Mucosa of descending colon (tissue), 3 donors: ENCODE measurements at regions of chr11 and their contacts with region 1.

Region 1: DNA sequence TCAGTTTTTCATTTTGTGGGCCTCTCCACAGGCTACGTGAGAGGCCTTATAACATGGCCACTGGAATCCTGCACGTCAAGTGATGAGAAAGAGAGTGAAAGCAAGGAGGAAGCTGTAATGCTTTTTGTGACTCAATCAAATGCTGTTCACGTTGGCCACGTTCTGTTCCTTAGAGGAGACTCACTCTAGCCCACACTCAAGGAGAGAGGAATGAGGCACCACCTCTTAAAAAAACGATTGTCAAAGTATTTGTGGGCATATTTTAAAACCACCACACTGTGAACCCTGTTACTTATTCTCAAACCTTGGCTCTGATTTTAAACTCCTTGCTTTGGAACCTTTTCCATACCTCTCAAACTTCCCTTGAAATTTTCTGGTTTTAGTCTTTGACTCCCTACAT is 705.0 kb downstream of the NELL1 start:
- DNase-seq: no peak
- ATAC-seq: no peak
- H3K4me3 ChIP-seq: no peak overlapping the region
- H3K4me1 ChIP-seq: no peaks in the 10 kb centered on the region
- CTCF ChIP-seq: no peak

Region 2: DNA sequence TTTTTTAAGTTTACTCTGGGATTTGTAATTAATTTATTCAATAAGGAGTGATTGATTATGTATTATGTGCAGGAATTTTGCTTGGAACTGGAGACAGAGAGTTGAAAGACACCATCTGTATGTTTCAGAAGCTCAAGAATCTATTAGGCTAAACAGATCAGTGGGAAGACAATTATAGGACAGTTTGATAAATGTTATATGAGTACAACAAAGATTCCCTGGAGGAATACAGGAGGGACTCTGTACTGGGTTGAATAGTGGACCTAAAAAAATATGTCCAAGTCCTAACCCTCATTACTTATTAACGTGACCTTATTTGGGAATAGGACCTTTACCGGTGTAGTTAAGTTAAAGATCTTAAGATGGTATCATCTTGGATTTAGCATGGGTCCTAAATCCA is 23.8 kb before region 1 on chr11:
- intact Hi-C with region 1: loop called in 1 of 2 experiments (anchors 2 kb)
- DNase-seq: no peak
- ATAC-seq: no peak
- H3K4me3 ChIP-seq: no peak overlapping the region
- H3K4me1 ChIP-seq: no peaks in the 10 kb centered on the region
- CTCF ChIP-seq: no peak